B cell (primary cell): ENCODE measurements at regions of chr1 and their contacts with region 1.

Region 1: DNA sequence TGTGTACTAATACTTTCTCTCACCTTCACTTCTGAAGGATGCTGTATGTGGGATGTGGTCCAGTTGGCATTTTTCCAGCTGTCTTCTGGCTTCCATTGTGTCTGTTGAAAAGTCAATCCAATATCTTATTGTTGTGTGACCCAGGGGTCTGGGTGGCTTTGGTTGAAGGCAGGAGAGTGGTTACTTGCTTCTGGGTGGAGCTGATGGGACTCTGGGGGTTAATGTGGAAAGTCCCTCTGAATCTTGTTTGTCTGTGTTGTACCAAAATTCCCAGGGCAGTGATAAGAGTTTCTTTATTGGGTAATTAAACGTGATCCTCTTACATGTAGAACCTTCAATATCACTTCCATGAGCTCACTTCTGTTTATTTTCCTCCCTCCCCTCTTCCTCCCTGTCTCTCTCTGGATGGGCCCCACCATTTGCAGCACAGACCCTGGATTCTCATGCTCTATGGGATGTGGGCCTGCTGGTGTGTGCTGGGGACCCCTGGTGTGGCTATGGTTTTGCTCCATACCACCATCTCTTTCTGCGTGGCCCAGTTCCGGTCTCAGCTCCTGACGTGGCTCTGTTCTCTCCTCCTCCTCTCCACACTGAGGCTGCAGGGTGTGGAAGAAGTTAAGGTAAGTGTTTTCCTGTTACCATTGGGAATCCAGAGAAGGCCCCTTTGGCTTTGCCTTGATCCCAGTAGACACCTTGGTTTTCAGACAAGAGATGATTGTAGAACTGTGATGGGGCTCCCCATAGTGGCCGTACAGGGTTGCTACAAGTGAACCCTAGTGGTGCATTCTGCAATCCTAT is 71.5 kb downstream of the HHAT start:
- DNase-seq: peak; percentile 50
- ATAC-seq: peak; percentile 80
- H3K4me3 ChIP-seq: no peak overlapping the region
- H3K4me3 Mint-ChIP-seq: no peak overlapping the region
- H3K27ac ChIP-seq: no peak overlapping the region
- H3K27ac Mint-ChIP-seq: peak overlapping the region; percentile 5
- H3K4me1 ChIP-seq: no peaks in the 10 kb centered on the region
- H3K4me1 Mint-ChIP-seq: peaks cover 7% of the 10 kb centered on the region
- H3K27me3 ChIP-seq: no peaks in the 10 kb centered on the region
- H3K27me3 Mint-ChIP-seq: no peaks in the 10 kb centered on the region
- CTCF ChIP-seq: peak; percentile 74

Region 2: DNA sequence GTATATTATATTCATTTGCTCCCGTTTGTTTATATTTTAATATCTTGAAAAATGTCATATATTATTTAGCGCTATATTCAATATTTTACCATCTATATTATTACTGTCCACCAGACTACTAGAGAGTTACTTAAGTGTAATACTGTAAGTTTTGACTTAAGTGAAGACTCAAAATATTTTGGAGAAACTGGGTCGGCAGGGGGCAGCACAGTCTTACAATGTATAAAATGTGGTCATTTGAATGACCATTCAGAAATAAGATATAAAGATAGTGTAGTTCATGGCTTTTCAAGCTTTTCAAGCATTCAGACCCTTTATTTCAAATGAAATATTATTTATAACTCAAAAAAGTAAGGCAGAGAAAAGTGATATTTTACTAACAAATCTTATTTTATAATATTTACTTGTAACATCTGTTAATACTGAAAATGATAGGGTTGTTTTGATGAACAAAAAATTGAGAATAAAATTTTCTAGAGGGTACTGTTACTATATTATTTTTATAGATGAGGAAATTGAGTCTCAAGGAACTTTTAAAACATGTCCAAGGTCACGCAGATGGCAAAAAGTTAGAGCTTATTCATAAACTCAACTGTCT is 256.7 kb before region 1 on chr1:
- CTCF ChIA-PET with region 1: interaction called, 24 read pairs
- POLR2A ChIA-PET with region 1: no interaction called
- intact Hi-C with region 1: no loop called
- DNase-seq: peak; percentile 36
- ATAC-seq: no peak
- H3K4me3 ChIP-seq: no peak overlapping the region
- H3K4me3 Mint-ChIP-seq: no peak overlapping the region
- H3K27ac ChIP-seq: no peak overlapping the region
- H3K27ac Mint-ChIP-seq: no peak overlapping the region
- H3K4me1 ChIP-seq: no peaks in the 10 kb centered on the region
- H3K4me1 Mint-ChIP-seq: no peaks in the 10 kb centered on the region
- H3K27me3 ChIP-seq: peaks cover 0 to 8% (median 5%) of the 10 kb centered on the region in 4 experiments
- H3K27me3 Mint-ChIP-seq: peaks cover 18% of the 10 kb centered on the region
- CTCF ChIP-seq: peak; percentile 69

Region 3: DNA sequence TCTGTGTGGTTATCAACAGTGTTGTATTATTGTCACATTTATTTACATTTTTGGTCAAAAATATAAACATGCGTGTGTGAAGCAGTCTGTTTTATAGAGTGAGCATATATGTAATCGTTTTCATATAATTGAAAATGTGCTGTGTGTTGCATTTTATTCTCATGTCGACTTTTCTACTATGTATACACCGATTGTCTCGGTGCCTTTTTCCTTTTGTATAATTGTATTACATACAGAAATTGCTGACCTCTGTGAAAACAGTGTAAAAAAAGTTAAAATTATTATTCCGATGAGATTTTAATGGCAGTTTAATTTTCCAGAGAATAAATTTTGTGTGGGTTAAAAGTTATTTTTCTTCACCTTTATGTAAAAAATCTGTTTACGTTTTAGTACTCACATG is 230.0 kb before region 1 on chr1:
- CTCF ChIA-PET with region 1: no interaction called
- POLR2A ChIA-PET with region 1: no interaction called
- intact Hi-C with region 1: no loop called
- DNase-seq: no peak
- ATAC-seq: no peak
- H3K4me3 ChIP-seq: no peak overlapping the region
- H3K4me3 Mint-ChIP-seq: no peak overlapping the region
- H3K27ac ChIP-seq: no peak overlapping the region
- H3K27ac Mint-ChIP-seq: no peak overlapping the region
- H3K4me1 ChIP-seq: no peaks in the 10 kb centered on the region
- H3K4me1 Mint-ChIP-seq: no peaks in the 10 kb centered on the region
- H3K27me3 ChIP-seq: peaks cover 0 to 6% (median 0%) of the 10 kb centered on the region in 4 experiments
- H3K27me3 Mint-ChIP-seq: peaks cover 8% of the 10 kb centered on the region
- CTCF ChIP-seq: no peak

Region 4: DNA sequence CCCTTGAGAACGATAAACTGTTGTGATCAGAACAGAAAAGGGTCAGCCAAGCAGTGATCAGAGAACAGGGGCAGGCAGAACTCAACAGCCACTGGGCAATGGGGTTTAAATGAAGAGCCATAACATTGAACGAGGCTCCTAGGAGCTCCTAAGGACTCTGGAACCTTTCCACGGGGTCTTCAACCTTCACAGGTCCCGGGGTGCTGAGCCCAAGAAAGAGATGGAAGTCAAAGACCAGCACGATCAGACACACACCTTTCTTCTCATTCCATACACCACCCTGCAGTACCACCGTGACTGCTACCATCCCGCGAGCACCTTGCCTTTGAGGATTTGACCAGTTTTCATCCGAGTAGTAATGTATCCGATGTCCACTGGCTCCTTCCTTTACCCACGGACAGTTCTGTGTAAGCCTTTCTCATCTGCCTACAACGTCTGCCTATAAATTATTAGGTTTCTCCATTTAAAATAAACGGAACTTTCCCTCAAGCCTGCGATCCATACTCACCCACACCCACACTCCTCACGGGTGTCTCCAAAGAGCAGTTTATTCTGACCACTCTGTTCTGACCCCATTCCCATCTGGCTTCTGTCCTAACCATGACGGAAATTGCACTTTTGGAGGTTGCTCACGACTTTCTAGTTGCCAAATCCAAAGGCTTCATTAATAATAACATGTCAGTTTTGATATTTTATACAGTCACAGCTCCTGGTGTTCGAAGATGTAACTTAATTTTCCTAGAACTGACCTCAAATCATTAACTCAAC is 88.3 kb before region 1 on chr1:
- CTCF ChIA-PET with region 1: interaction called, 9 read pairs
- POLR2A ChIA-PET with region 1: no interaction called
- intact Hi-C with region 1: loop called (anchors 1 kb)
- DNase-seq: no peak
- ATAC-seq: no peak
- H3K4me3 ChIP-seq: peak overlapping the region in 3 of 5 experiments; percentile 42 to 66 (median 55)
- H3K4me3 Mint-ChIP-seq: peak overlapping the region; percentile 85
- H3K27ac ChIP-seq: no peak overlapping the region
- H3K27ac Mint-ChIP-seq: no peak overlapping the region
- H3K4me1 ChIP-seq: peaks cover 3 to 13% of the 10 kb centered on the region in 2 donors
- H3K4me1 Mint-ChIP-seq: peaks cover 6% of the 10 kb centered on the region
- H3K27me3 ChIP-seq: peaks cover 0 to 2% (median 0%) of the 10 kb centered on the region in 4 experiments
- H3K27me3 Mint-ChIP-seq: peaks cover 17% of the 10 kb centered on the region
- CTCF ChIP-seq: no peak

Region 5: GRCh38 chr1:210360852-210361477 is 39.3 kb before region 1 on chr1:
- CTCF ChIA-PET with region 1: interaction called, 14 read pairs
- POLR2A ChIA-PET with region 1: no interaction called
- intact Hi-C with region 1: no loop called
- DNase-seq: peak; percentile 23
- ATAC-seq: peak; percentile 43
- H3K4me3 ChIP-seq: no peak overlapping the region
- H3K4me3 Mint-ChIP-seq: no peak overlapping the region
- H3K27ac ChIP-seq: no peak overlapping the region
- H3K27ac Mint-ChIP-seq: no peak overlapping the region
- H3K4me1 ChIP-seq: no peaks in the 10 kb centered on the region
- H3K4me1 Mint-ChIP-seq: no peaks in the 10 kb centered on the region
- H3K27me3 ChIP-seq: no peaks in the 10 kb centered on the region
- H3K27me3 Mint-ChIP-seq: no peaks in the 10 kb centered on the region
- CTCF ChIP-seq: no peak